B cell (primary cell): ENCODE measurements at regions of chr10 and their contacts with region 1.

Region 1: GRCh38 chr10:67779465-67780203 is 58.4 kb downstream of the DNAJC12 start:
- DNase-seq: peak; percentile 90
- ATAC-seq: peak; percentile 80
- H3K4me3 ChIP-seq: no peak overlapping the region
- H3K4me3 Mint-ChIP-seq: no peak overlapping the region
- H3K27ac ChIP-seq: no peak overlapping the region
- H3K27ac Mint-ChIP-seq: no peak overlapping the region
- H3K4me1 ChIP-seq: peaks cover 27 to 38% of the 10 kb centered on the region in 2 donors
- H3K4me1 Mint-ChIP-seq: peaks cover 31% of the 10 kb centered on the region
- H3K27me3 ChIP-seq: no peaks in the 10 kb centered on the region
- H3K27me3 Mint-ChIP-seq: no peaks in the 10 kb centered on the region
- CTCF ChIP-seq: peak; percentile 90

Region 2: DNA sequence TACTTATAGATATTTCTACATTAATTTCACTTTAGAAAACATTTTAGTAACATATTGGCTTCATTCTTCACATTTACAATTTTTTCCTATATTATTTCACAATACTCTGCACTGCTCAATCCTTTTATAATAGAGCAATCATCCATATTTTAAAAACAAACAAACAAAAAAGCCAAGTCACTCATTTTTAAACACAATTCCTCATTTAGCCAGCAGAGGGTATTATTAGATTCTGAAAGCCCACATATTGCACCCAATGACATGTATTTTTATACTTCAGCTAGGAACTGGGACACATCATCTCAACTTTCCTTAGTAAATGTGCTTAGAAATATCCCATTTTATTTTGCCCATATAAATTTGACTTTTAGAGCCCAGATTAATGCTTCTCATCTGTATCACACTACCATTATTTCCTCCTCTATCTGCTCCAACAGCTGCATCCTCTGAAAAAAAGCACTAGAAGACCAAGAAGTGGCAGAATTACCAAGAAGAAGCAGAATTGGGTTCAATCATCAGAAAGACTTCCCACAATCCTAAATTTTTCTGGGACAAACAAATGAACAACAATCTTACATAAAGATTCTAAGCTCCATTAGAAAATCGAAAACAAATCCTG is 113.1 kb before region 1 on chr10:
- CTCF ChIA-PET with region 1: interaction called, 141 read pairs
- POLR2A ChIA-PET with region 1: no interaction called
- intact Hi-C with region 1: no loop called
- DNase-seq: peak; percentile 41
- ATAC-seq: no peak
- H3K4me3 ChIP-seq: no peak overlapping the region
- H3K4me3 Mint-ChIP-seq: no peak overlapping the region
- H3K27ac ChIP-seq: no peak overlapping the region
- H3K27ac Mint-ChIP-seq: no peak overlapping the region
- H3K4me1 ChIP-seq: no peaks in the 10 kb centered on the region
- H3K4me1 Mint-ChIP-seq: no peaks in the 10 kb centered on the region
- H3K27me3 ChIP-seq: peaks cover 0 to 3% (median 1%) of the 10 kb centered on the region in 4 experiments
- H3K27me3 Mint-ChIP-seq: peaks cover 8% of the 10 kb centered on the region
- CTCF ChIP-seq: peak; percentile 72

Region 3: GRCh38 chr10:67705921-67706320 is 73.7 kb before region 1 on chr10:
- CTCF ChIA-PET with region 1: interaction called, 11 read pairs
- POLR2A ChIA-PET with region 1: no interaction called
- intact Hi-C with region 1: no loop called
- DNase-seq: no peak
- ATAC-seq: no peak
- H3K4me3 ChIP-seq: no peak overlapping the region
- H3K4me3 Mint-ChIP-seq: no peak overlapping the region
- H3K27ac ChIP-seq: no peak overlapping the region
- H3K27ac Mint-ChIP-seq: no peak overlapping the region
- H3K4me1 ChIP-seq: no peaks in the 10 kb centered on the region
- H3K4me1 Mint-ChIP-seq: no peaks in the 10 kb centered on the region
- H3K27me3 ChIP-seq: peaks cover 0 to 4% (median 0%) of the 10 kb centered on the region in 4 experiments
- H3K27me3 Mint-ChIP-seq: peaks cover 11% of the 10 kb centered on the region
- CTCF ChIP-seq: no peak

Region 4: GRCh38 chr10:67849331-67850011 is 69.8 kb after region 1 on chr10:
- CTCF ChIA-PET with region 1: interaction called, 11 read pairs
- POLR2A ChIA-PET with region 1: no interaction called
- intact Hi-C with region 1: loop called (anchors 5 kb)
- DNase-seq: peak; percentile 93
- ATAC-seq: peak; percentile 99
- H3K4me3 ChIP-seq: peak overlapping the region; percentile 79 to 98 (median 96)
- H3K4me3 Mint-ChIP-seq: peak overlapping the region; percentile 97
- H3K27ac ChIP-seq: peak overlapping the region; percentile 89 to 91
- H3K27ac Mint-ChIP-seq: peak overlapping the region; percentile 97
- H3K4me1 ChIP-seq: peaks cover 5 to 9% of the 10 kb centered on the region in 2 donors
- H3K4me1 Mint-ChIP-seq: peaks cover 8% of the 10 kb centered on the region
- H3K27me3 ChIP-seq: no peaks in the 10 kb centered on the region
- H3K27me3 Mint-ChIP-seq: no peaks in the 10 kb centered on the region
- CTCF ChIP-seq: no peak